Cardiac septum (tissue), 1 donor: ENCODE measurements at regions of chr3 and their contacts with region 1.

Region 1: DNA sequence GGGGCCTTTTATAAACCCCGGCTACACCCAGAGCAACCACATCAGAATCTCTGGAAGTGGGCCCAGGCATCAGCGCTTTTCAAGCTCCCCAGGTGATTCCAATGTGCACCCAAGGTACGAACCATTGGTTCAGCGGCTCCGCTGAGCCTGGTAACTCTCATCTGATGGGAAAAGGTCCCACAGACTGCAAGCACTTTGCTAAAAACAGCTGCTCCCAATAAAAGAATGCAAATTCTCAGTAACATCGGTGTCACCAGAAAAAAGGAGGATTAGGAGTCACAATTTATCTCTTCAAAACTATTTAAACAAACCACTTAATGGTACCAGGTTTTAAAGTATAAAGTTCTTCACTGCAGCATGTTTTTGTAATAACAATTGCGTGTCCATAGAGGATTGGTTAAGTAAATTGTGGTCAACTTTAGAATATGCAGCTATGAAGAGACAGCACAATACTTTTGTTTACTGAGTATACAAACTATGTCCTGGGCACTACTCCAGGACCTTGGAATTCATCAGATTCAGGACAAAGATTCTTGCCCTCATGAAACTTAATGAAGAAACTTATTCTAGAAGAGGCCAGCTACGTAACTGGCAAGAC is 660.7 kb upstream of the ADAMTS9 start:
- DNase-seq: no peak

Region 2: DNA sequence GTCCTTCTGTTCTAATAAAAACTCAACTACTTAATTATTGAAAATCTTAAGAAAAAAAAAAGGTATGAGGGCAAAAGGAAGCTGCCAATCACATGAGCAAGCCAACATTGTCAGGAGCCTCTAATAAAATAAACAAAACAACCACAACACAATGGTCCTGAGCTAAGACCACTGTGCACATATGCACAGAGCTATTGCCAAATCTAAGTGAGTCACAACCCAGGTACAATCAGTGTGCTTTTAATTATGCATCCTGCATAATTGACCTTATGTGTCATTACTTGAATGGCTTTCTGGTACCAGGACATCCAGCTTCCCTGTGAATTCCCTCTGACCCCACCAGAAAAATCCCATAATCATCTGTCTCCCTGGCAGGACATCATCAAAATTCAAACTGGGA is 50.5 kb after region 1 on chr3:
- intact Hi-C with region 1: loop called (anchors 5 kb)
- DNase-seq: no peak

Region 3: DNA sequence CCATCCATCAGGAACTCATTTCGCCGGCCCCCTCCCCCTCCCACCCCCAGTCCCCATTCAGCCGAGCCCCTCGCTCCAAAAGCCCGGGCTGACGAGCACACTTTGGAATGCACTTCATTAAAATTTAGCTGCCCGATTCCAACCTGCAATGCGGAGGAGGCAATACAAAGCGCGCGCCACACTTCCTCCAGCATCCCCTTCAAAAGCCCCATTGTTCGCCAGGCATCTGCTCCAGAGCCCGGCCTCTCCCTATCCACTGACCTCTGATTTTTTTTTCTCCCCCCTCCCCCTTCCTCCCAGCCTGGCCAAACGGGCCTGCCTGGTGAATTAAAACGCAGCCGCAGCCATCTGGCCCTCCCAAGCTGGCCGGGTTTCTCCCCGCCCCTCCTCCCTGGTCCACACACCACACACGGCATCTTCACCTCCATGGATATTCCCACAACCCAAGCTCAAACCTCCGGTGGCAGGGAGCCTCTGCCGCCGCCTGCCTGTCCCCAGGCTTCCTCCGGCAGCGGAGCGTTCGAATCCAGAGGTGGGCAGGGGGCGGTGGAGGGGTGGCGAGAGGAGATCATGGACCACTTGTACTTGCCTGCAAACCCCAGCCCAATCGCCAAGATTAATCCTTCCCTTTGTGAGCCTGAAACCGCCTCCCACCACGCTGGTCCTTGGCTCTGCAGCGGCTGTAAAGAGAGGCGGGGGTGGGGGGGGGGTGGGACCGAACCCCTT is 248.9 kb after region 1 on chr3:
- intact Hi-C with region 1: no loop called
- DNase-seq: no peak